HEK293 (cell line): ENCODE measurements at regions of chr5 and their contacts with region 1.

Region 1: GRCh38 chr5:139633295-139634027 is 14.7 kb upstream of the CXXC5 start:
- H3K4me3 ChIP-seq: no peak overlapping the region
- H3K27ac ChIP-seq: no peak overlapping the region
- H3K4me1 ChIP-seq: peaks cover 2% of the 10 kb centered on the region; the same call in 1 of the 2 replicates
- CTCF ChIP-seq: peak; percentile 96

Region 2: DNA sequence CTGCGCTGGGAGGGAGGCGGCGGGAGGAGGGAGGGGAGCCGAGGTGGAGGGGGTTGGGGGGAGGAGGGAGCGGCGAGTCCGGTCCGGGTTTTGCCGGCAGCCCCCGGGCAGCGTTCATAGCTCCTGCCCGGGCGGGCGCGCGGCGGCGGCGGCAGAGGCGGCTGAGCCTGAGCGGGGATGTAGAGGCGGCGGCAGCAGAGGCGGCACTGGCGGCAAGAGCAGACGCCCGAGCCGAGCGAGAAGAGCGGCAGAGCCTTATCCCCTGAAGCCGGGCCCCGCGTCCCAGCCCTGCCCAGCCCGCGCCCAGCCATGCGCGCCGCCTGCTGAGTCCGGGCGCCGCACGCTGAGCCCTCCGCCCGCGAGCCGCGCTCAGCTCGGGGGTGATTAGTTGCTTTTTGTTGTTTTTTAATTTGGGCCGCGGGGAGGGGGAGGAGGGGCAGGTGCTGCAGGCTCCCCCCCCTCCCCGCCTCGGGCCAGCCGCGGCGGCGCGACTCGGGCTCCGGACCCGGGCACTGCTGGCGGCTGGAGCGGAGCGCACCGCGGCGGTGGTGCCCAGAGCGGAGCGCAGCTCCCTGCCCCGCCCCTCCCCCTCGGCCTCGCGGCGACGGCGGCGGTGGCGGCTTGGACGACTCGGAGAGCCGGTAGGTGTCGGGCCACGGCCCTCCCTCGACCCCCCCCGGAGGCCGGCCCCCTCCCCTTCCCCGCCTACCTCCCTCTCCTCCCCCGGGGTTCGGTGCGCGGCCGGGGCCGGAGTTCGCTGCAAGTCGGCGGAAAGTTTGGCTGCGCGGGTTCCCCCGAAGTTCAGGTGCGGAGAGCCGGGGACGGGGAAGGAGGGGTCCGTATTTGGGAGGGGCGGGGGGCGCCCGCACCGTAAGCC is 15.0 kb after region 1 on chr5 and contains the start of gene CXXC5:
- CTCF ChIA-PET with region 1: interaction called, 20 read pairs
- POLR2A ChIA-PET with region 1: interaction called, 96 read pairs
- H3K4me3 ChIP-seq: peak within 1 kb of the TSS; percentile 79
- H3K27ac ChIP-seq: peak within 1 kb of the TSS; percentile 82; the same call in 1 of the 2 replicates
- H3K4me1 ChIP-seq: peaks cover 28% of the 10 kb centered on the region
- CTCF ChIP-seq: no peak

Region 3: GRCh38 chr5:139711067-139711905 is 77.8 kb after region 1 on chr5:
- CTCF ChIA-PET with region 1: interaction called, 17 read pairs
- POLR2A ChIA-PET with region 1: interaction called, 4 read pairs
- H3K4me3 ChIP-seq: peak overlapping the region; percentile 41
- H3K27ac ChIP-seq: peak overlapping the region; percentile 29; the same call in 1 of the 2 replicates
- H3K4me1 ChIP-seq: 0 out of 2 replicates have a peak, but pooled peaks cover 3% of the 10 kb centered on the region
- CTCF ChIP-seq: peak; percentile 21; the same call in 1 of the 2 replicates

Region 4: GRCh38 chr5:139760066-139761056 is 126.9 kb after region 1 on chr5:
- CTCF ChIA-PET with region 1: interaction called, 269 read pairs
- POLR2A ChIA-PET with region 1: interaction called, 5 read pairs
- H3K4me3 ChIP-seq: no peak overlapping the region
- H3K27ac ChIP-seq: no peak overlapping the region
- H3K4me1 ChIP-seq: no peaks in the 10 kb centered on the region; the same call in 1 of the 2 replicates
- CTCF ChIP-seq: no peak

Region 5: DNA sequence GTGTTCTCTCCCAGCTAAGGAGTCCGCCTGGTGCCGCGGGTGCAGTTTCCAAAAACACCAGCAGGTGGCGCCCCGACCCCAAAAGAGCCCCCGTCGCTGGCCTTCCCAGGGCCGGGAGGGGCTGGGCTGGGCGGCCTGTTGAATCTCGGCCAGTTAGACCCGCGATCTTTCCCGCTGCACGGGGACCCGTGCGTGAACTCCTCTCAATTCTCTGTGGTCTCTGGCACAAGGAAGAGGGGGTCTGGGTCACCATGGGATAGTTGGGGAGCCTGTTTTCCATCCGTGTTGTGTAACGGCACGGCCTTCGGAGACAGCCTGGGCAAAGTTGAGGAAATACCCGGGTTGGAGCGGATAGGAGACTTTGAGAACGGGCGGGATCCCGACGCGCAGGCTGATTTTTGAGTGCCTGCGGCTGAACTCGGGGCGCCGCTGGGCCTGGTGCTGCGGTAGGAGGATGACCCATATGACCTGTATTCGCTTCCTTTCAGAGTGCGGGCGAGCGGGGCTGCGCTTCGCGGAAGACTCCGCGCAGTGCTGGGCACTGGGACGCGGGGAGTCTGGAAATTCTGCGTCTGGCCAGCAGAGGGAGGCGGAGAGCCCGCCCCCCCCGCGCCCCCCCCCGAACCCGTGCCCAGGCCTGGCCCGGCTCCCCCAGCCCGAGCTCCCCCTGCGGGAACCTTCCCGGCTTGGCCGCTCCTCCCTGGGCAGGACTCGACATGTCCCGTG is 154.3 kb after region 1 on chr5:
- CTCF ChIA-PET with region 1: interaction called, 47 read pairs
- POLR2A ChIA-PET with region 1: no interaction called
- H3K4me3 ChIP-seq: peak overlapping the region; percentile 48
- H3K27ac ChIP-seq: peak overlapping the region; percentile 56; the same call in 1 of the 2 replicates
- H3K4me1 ChIP-seq: no peaks in the 10 kb centered on the region
- CTCF ChIP-seq: peak; percentile 79; the same call in 1 of the 2 replicates